ENCODE measurements at regions of chrX and their contacts with region 1.

Region 1: DNA sequence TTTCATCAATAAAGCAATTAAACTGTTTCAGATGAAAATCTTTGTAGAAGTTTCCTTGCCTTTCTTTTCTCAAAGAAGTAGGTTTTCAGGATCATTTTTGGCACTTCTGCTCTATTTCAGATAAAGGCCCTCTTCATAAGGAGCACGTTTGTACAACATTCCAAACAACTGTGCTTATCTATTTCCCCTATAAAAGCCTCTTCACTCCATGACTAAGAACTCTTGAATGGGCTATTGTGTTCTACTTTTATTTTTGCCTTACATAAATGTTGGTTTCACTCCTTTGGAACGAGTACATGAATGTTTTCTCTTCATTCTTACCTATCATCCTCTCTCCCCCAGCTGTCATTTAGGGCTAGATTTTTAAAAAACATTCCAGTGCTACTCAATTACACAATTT is 288.0 kb upstream of the PPP1R2C start:
- DNase-seq: no peak
- ATAC-seq: no peak
- H3K4me3 ChIP-seq: no peak overlapping the region
- H3K4me3 Mint-ChIP-seq: no peak overlapping the region
- H3K27ac ChIP-seq: no peak overlapping the region
- H3K27ac Mint-ChIP-seq: no peak overlapping the region
- H3K4me1 ChIP-seq: no peaks in the 10 kb centered on the region
- H3K4me1 Mint-ChIP-seq: no peaks in the 10 kb centered on the region
- H3K27me3 ChIP-seq: no peaks in the 10 kb centered on the region
- H3K27me3 Mint-ChIP-seq: no peaks in the 10 kb centered on the region
- CTCF ChIP-seq: no peak

Region 2: DNA sequence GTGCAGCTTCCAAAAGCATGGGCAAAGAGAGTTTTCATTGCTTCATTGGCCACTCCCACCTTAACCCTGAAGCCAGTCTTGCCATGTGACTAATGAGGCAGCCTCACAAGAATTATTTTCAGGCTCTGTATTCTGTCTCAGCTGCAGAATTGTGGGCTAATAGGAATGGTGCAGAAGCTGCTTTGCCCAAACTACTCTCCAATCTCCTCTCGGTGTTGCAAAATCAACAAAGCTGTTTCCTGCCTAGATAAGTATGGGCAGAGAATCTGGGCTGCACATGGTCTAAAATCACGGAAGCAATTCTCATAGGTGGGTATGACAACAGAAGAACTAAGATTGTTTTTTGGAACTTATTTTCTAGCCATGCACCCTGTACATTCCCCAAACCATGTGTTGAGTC is 319.4 kb before region 1 on chrX:
- CTCF ChIA-PET with region 1: no interaction called
- POLR2A ChIA-PET with region 1: no interaction called
- intact Hi-C with region 1: loop called in 1 of 2 experiments (anchors 10 kb)
- DNase-seq: no peak
- ATAC-seq: no peak
- H3K4me3 ChIP-seq: no peak overlapping the region
- H3K4me3 Mint-ChIP-seq: no peak overlapping the region
- H3K27ac ChIP-seq: no peak overlapping the region
- H3K27ac Mint-ChIP-seq: no peak overlapping the region
- H3K4me1 ChIP-seq: no peaks in the 10 kb centered on the region
- H3K4me1 Mint-ChIP-seq: no peaks in the 10 kb centered on the region
- H3K27me3 ChIP-seq: no peaks in the 10 kb centered on the region
- H3K27me3 Mint-ChIP-seq: no peaks in the 10 kb centered on the region
- CTCF ChIP-seq: no peak

Region 3: DNA sequence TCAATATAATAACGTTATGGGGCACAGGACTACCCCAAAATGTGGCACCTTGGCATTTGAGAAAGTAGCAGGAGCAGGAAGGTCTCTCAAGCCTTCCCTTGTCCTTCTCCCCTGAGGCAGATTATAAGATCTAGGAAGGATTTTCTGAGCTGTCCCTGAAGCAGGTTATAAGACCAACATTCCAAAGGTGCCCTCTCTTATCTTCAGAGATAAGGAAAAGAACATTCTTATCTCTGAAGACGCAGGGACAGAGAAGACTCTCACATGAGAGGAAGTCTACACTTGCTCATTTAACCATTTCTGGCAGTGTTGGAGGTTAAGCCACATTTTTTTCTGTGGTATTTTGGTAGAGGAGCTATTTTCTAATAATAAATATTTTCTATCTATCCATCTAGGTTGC is 152.2 kb after region 1 on chrX:
- CTCF ChIA-PET with region 1: no interaction called
- POLR2A ChIA-PET with region 1: no interaction called
- intact Hi-C with region 1: no loop called
- DNase-seq: no peak
- ATAC-seq: no peak
- H3K4me3 ChIP-seq: no peak overlapping the region
- H3K4me3 Mint-ChIP-seq: no peak overlapping the region
- H3K27ac ChIP-seq: no peak overlapping the region
- H3K27ac Mint-ChIP-seq: no peak overlapping the region
- H3K4me1 ChIP-seq: no peaks in the 10 kb centered on the region
- H3K4me1 Mint-ChIP-seq: no peaks in the 10 kb centered on the region
- H3K27me3 ChIP-seq: no peaks in the 10 kb centered on the region
- H3K27me3 Mint-ChIP-seq: no peaks in the 10 kb centered on the region
- CTCF ChIP-seq: no peak